Esophagus muscularis mucosa (tissue), 4 donors: ENCODE measurements at regions of chr6 and their contacts with region 1.

Region 1: DNA sequence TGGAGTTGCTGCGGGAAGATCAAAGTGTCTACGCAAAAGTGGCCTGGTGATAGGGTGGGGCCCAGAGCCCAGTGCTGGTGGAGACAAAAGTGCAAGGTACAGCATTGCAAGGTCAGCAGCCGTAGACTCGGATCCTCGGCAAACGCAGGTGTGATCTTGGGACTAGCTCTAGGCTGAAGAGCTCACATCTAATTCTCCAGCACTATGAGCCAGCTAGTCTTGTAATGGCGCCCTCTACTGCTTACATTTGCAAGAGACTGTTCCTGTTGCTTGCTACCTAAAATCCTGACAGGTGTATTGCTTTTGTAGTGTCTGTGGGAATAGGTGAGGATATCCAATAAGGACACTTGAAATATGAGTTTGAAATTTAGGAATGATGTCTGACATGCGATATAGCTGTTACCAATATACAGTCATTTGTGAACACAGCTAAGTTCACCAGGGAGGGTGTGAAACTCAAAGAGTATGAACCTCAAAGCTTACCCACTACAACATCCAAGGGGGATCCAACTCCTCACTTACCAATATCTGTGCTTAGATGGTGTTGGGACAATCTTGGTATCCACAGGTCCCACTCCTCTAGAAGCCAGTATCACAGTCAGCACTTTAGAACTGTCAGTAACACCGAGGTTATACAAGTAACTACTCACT is 58.4 kb downstream of the PDE7B start:
- DNase-seq: no peak
- H3K4me3 ChIP-seq: no peak overlapping the region
- H3K27ac ChIP-seq: no peak overlapping the region
- H3K4me1 ChIP-seq: no peaks in the 10 kb centered on the region
- H3K27me3 ChIP-seq: no peaks in the 10 kb centered on the region
- CTCF ChIP-seq: peak; percentile 11 to 39 (median 11)
- EP300 ChIP-seq: no peak
- POLR2A ChIP-seq: no peak

Region 2: DNA sequence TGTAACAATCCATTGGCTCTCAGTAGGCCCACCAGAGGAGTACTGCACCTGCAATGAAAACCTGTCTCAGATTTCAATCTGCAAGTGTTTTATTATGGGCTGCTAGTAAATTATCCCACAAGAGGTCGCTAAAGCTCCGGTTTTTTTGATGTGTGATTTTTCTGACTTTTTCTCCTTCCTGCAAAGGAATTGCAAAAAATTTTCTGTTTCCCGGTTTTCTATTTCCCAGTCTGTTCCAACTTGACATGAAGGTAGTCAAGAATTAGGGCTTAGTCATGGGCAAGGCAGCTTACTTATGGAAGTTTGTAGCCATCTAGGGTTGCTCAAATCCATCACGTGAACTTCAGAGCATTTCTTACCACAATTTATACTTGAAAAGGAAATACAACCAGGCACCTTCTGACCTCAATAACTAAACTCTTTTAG is 373.9 kb before region 1 on chr6:
- intact Hi-C with region 1: loop called (anchors 10 kb)
- DNase-seq: no peak
- H3K4me3 ChIP-seq: no peak overlapping the region
- H3K27ac ChIP-seq: no peak overlapping the region
- H3K4me1 ChIP-seq: peaks cover 0 to 10% (median 0%) of the 10 kb centered on the region in 4 donors
- H3K27me3 ChIP-seq: no peaks in the 10 kb centered on the region
- CTCF ChIP-seq: peak; percentile 58 to 71 (median 67)
- EP300 ChIP-seq: no peak
- POLR2A ChIP-seq: no peak

Region 3: GRCh38 chr6:135972150-135972549 is 62.3 kb after region 1 on chr6:
- intact Hi-C with region 1: no loop called
- DNase-seq: no peak
- H3K4me3 ChIP-seq: no peak overlapping the region
- H3K27ac ChIP-seq: no peak overlapping the region
- H3K4me1 ChIP-seq: no peaks in the 10 kb centered on the region
- H3K27me3 ChIP-seq: no peaks in the 10 kb centered on the region
- CTCF ChIP-seq: no peak
- EP300 ChIP-seq: no peak
- POLR2A ChIP-seq: no peak

Region 4: GRCh38 chr6:135994857-135995544 is 85.1 kb after region 1 on chr6:
- intact Hi-C with region 1: no loop called
- DNase-seq: no peak
- H3K4me3 ChIP-seq: no peak overlapping the region
- H3K27ac ChIP-seq: no peak overlapping the region
- H3K4me1 ChIP-seq: peaks cover 0 to 4% (median 0%) of the 10 kb centered on the region in 4 donors
- H3K27me3 ChIP-seq: no peaks in the 10 kb centered on the region
- CTCF ChIP-seq: no peak
- EP300 ChIP-seq: no peak
- POLR2A ChIP-seq: no peak

Region 5: DNA sequence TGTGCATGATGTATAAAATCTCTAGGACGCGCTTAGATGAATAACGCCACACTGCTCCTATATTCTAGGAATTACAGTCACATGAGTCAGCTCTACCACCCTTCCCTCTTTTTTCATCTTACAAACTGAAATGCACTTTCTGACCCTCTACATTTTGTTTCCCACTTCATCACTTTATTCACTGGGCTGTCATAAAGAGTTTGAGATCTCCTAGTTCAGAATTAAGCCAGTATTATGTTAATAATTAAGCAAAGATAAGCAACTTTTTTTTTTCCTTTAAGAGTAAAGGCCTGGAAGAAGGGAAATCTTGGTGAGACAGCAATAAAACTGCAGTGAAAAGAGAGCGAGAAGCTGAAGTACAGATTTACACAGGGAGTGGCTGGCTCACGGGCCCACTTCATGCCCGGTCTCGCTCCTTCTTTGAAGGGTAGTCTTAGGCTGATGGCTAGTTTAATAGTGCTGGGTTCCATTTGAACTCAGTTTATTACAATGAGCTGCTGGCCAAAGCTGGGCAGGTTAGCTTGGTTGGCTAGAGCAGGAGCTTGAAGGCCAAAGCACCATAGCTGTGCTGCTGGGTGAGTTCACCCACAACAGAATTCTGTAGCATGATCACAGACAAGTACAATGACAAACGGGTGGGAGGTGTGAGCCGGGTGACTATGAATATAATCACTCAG is 529.8 kb after region 1 on chr6:
- intact Hi-C with region 1: no loop called
- DNase-seq: no peak
- H3K4me3 ChIP-seq: no peak overlapping the region
- H3K27ac ChIP-seq: no peak overlapping the region
- H3K4me1 ChIP-seq: no peaks in the 10 kb centered on the region
- H3K27me3 ChIP-seq: no peaks in the 10 kb centered on the region
- CTCF ChIP-seq: no peak
- EP300 ChIP-seq: no peak
- POLR2A ChIP-seq: no peak